ENCODE measurements at regions of chr19 and their contacts with region 1.

Region 1: GRCh38 chr19:34145741-34146202 is 26.5 kb upstream of the LSM14A start:
- DNase-seq: peak; percentile 56
- ATAC-seq: peak; percentile 92
- H3K4me3 ChIP-seq: no peak overlapping the region
- H3K27ac ChIP-seq: no peak overlapping the region
- H3K4me1 ChIP-seq: no peaks in the 10 kb centered on the region
- H3K27me3 ChIP-seq: no peaks in the 10 kb centered on the region
- CTCF ChIP-seq: peak; percentile 89
- POLR2A ChIP-seq: no peak
- RAD21 ChIP-seq: peak; percentile 85

Region 2: GRCh38 chr19:33953592-33953991 is 192.2 kb before region 1 on chr19:
- CTCF ChIA-PET with region 1: no interaction called
- POLR2A ChIA-PET with region 1: no interaction called
- dilution Hi-C with region 1: no loop called
- in situ Hi-C with region 1: no loop called
- intact Hi-C with region 1: no loop called
- DNase-seq: no peak
- ATAC-seq: no peak
- H3K4me3 ChIP-seq: no peak overlapping the region
- H3K27ac ChIP-seq: no peak overlapping the region
- H3K4me1 ChIP-seq: no peaks in the 10 kb centered on the region
- H3K27me3 ChIP-seq: no peaks in the 10 kb centered on the region
- CTCF ChIP-seq: no peak
- POLR2A ChIP-seq: no peak
- RAD21 ChIP-seq: no peak

Region 3: GRCh38 chr19:34041925-34042521 is 103.7 kb before region 1 on chr19:
- CTCF ChIA-PET with region 1: interaction called, 8 read pairs
- POLR2A ChIA-PET with region 1: no interaction called
- dilution Hi-C with region 1: no loop called
- in situ Hi-C with region 1: no loop called
- intact Hi-C with region 1: loop called (anchors 1 kb)
- DNase-seq: peak; percentile 33
- ATAC-seq: peak; percentile 83
- H3K4me3 ChIP-seq: no peak overlapping the region
- H3K27ac ChIP-seq: no peak overlapping the region
- H3K4me1 ChIP-seq: no peaks in the 10 kb centered on the region
- H3K27me3 ChIP-seq: no peaks in the 10 kb centered on the region; the same call in 1 of the 2 replicates
- CTCF ChIP-seq: peak; percentile 76
- POLR2A ChIP-seq: no peak
- RAD21 ChIP-seq: peak; percentile 60

Region 4: DNA sequence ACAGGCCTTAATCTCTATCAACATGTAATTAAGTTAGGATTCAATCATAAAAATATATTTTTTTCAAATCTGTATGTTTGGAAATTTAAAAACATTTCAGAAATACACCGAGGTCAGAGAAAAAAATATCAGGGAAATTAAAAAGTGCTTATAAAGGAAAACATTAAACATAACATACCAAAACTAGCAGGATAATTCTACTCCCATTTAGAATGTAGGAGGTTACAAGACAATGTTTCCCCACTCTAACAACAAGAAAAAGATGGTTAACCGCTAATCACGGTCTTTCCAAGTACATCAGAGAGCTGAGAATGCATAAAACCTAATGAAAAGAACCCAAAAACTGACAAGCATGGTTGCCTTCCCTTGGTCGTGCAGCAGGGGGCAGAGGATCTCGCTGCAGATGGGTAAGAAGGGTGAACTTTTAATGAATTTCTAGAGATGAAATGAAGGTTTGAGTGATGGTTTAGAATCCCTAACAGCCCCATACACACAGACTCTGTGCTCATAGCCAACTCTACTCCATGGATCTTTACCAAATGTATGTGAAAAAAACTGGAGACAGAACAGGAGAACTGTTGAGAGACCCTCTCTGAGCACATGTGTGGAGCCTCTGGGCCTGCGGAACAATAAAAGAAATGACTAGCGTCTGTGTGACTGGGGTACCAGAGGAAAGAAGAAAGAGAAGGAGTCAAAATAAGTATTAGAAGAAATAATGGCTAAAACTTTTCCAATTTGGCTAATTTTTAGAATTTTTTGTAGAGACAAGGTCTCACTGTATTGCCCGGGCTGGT is 24.7 kb before region 1 on chr19:
- CTCF ChIA-PET with region 1: interaction called, 4 read pairs
- POLR2A ChIA-PET with region 1: no interaction called
- dilution Hi-C with region 1: no loop called
- in situ Hi-C with region 1: no loop called
- intact Hi-C with region 1: loop called (anchors 1 kb)
- DNase-seq: peak; percentile 52
- ATAC-seq: peak; percentile 89
- H3K4me3 ChIP-seq: no peak overlapping the region
- H3K27ac ChIP-seq: no peak overlapping the region
- H3K4me1 ChIP-seq: no peaks in the 10 kb centered on the region
- H3K27me3 ChIP-seq: peaks cover 17% of the 10 kb centered on the region
- CTCF ChIP-seq: peak; percentile 76
- POLR2A ChIP-seq: no peak
- RAD21 ChIP-seq: peak; percentile 62

Region 5: GRCh38 chr19:34165295-34165738 is 19.5 kb after region 1 on chr19:
- CTCF ChIA-PET with region 1: interaction called, 4 read pairs
- POLR2A ChIA-PET with region 1: no interaction called
- dilution Hi-C with region 1: no loop called
- in situ Hi-C with region 1: no loop called
- intact Hi-C with region 1: loop called (anchors 2 kb)
- DNase-seq: no peak
- ATAC-seq: no peak
- H3K4me3 ChIP-seq: no peak overlapping the region
- H3K27ac ChIP-seq: no peak overlapping the region
- H3K4me1 ChIP-seq: no peaks in the 10 kb centered on the region
- H3K27me3 ChIP-seq: peaks cover 3% of the 10 kb centered on the region; the same call in 1 of the 2 replicates
- CTCF ChIP-seq: no peak
- POLR2A ChIP-seq: no peak
- RAD21 ChIP-seq: no peak